Activated CD8-positive, alpha-beta T cell treated with anti-CD3 and anti-CD28 coated beads for 36 hours (primary cell): ENCODE measurements at regions of chr18 and their contacts with region 1.

Region 1: GRCh38 chr18:46173393-46174341 is 69.5 kb downstream of the HAUS1 start:
- DNase-seq: peak; percentile 97
- ATAC-seq: peak; percentile 88
- H3K4me3 Mint-ChIP-seq: peak overlapping the region; percentile 94
- H3K27ac Mint-ChIP-seq: peak overlapping the region; percentile 98
- H3K4me1 Mint-ChIP-seq: peaks cover 36% of the 10 kb centered on the region
- H3K27me3 Mint-ChIP-seq: no peaks in the 10 kb centered on the region
- CTCF ChIP-seq: peak; percentile 97

Region 2: DNA sequence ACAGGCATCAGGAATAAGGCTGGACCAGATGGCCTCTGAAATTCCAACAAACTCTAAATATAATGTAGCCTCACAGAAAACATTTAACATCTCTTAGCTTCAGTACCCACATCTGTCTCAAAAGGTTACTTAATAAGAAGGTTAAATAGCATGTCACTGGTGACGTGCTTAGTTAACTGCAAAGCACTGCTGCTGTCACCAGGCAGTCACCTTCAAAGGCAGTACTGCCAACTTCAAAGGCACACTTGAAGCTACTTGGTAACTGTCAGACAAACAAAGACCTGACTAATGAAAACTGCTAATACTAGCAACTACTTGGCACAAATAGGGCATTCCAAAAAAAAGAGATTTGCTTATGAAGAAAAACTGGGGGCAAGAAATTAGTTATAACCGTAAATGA is 242.7 kb before region 1 on chr18:
- CTCF ChIA-PET with region 1: no interaction called
- POLR2A ChIA-PET with region 1: no interaction called
- intact Hi-C with region 1: no loop called
- DNase-seq: no peak
- ATAC-seq: no peak
- H3K4me3 Mint-ChIP-seq: no peak overlapping the region
- H3K27ac Mint-ChIP-seq: no peak overlapping the region
- H3K4me1 Mint-ChIP-seq: peaks cover 4% of the 10 kb centered on the region
- H3K27me3 Mint-ChIP-seq: no peaks in the 10 kb centered on the region
- CTCF ChIP-seq: no peak

Region 3: DNA sequence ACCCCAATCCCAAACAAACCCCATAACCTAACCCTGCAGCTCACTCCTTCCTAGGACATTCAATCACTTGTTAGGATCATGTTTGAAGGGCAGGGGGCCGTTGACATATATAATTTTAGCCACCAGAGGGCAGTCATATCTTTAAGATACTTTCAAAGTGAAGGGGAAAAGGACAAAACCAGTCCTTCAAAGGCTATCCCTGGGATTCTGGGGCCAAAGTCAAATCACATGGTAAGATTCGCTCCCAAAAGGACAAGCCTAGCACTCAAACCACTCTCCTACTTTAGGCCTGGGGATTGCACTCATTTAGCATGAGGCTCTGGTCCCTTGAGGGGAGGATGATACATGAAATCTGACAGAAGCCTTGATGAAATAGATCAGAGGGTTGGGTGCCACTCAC is 24.9 kb before region 1 on chr18:
- CTCF ChIA-PET with region 1: interaction called, 47 read pairs
- POLR2A ChIA-PET with region 1: interaction called, 7 read pairs
- intact Hi-C with region 1: no loop called
- DNase-seq: peak; percentile 73
- ATAC-seq: peak; percentile 63
- H3K4me3 Mint-ChIP-seq: no peak overlapping the region
- H3K27ac Mint-ChIP-seq: peak overlapping the region; percentile 65
- H3K4me1 Mint-ChIP-seq: peaks cover 30% of the 10 kb centered on the region
- H3K27me3 Mint-ChIP-seq: no peaks in the 10 kb centered on the region
- CTCF ChIP-seq: peak; percentile 76

Region 4: GRCh38 chr18:46199515-46200147 is 26.0 kb after region 1 on chr18:
- CTCF ChIA-PET with region 1: interaction called, 54 read pairs
- POLR2A ChIA-PET with region 1: interaction called, 3 read pairs
- intact Hi-C with region 1: no loop called
- DNase-seq: no peak
- ATAC-seq: peak; percentile 76
- H3K4me3 Mint-ChIP-seq: no peak overlapping the region
- H3K27ac Mint-ChIP-seq: peak overlapping the region; percentile 18
- H3K4me1 Mint-ChIP-seq: peaks cover 62% of the 10 kb centered on the region
- H3K27me3 Mint-ChIP-seq: no peaks in the 10 kb centered on the region
- CTCF ChIP-seq: no peak

Region 5: GRCh38 chr18:46220116-46220515 is 46.4 kb after region 1 on chr18:
- CTCF ChIA-PET with region 1: interaction called, 57 read pairs
- POLR2A ChIA-PET with region 1: interaction called, 4 read pairs
- intact Hi-C with region 1: no loop called
- DNase-seq: no peak
- ATAC-seq: no peak
- H3K4me3 Mint-ChIP-seq: no peak overlapping the region
- H3K27ac Mint-ChIP-seq: no peak overlapping the region
- H3K4me1 Mint-ChIP-seq: peaks cover 82% of the 10 kb centered on the region
- H3K27me3 Mint-ChIP-seq: no peaks in the 10 kb centered on the region
- CTCF ChIP-seq: no peak

Region 6: GRCh38 chr18:46250084-46250811 is 76.6 kb after region 1 on chr18:
- CTCF ChIA-PET with region 1: interaction called, 38 read pairs
- POLR2A ChIA-PET with region 1: interaction called, 21 read pairs
- intact Hi-C with region 1: loop called (anchors 5 kb)
- DNase-seq: peak; percentile 74
- ATAC-seq: peak; percentile 93
- H3K4me3 Mint-ChIP-seq: peak overlapping the region; percentile 50
- H3K27ac Mint-ChIP-seq: peak overlapping the region; percentile 91
- H3K4me1 Mint-ChIP-seq: peaks cover 68% of the 10 kb centered on the region
- H3K27me3 Mint-ChIP-seq: no peaks in the 10 kb centered on the region
- CTCF ChIP-seq: no peak

Region 7: DNA sequence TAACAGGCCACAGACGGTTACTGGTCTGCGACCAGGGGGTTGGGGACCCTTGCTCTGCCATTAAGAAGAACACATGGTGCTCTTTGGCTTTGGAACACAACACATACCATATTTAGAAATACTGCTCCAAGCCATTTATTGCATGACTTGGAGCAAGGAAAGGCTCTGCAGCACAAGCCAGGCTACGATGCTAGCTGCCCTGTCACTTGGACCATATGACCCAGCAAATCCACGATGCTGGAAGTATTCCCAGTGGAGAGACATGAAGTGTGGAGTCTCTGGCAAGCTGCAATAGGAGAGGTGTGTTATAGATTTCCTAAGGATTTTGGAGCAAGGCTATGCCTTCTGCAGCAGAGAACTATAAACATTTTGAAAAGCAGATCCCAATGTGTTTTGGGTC is 101.7 kb after region 1 on chr18:
- CTCF ChIA-PET with region 1: interaction called, 34 read pairs
- POLR2A ChIA-PET with region 1: no interaction called
- intact Hi-C with region 1: no loop called
- DNase-seq: no peak
- ATAC-seq: no peak
- H3K4me3 Mint-ChIP-seq: no peak overlapping the region
- H3K27ac Mint-ChIP-seq: no peak overlapping the region
- H3K4me1 Mint-ChIP-seq: peaks cover 7% of the 10 kb centered on the region
- H3K27me3 Mint-ChIP-seq: no peaks in the 10 kb centered on the region
- CTCF ChIP-seq: no peak